ENCODE measurements at regions of chr17 and their contacts with region 1.

Region 1: GRCh38 chr17:13437966-13438779 is 163.6 kb downstream of the HS3ST3A1 start:
- DNase-seq: no peak
- H3K4me3 Mint-ChIP-seq: no peak overlapping the region
- H3K27ac Mint-ChIP-seq: no peak overlapping the region
- H3K4me1 Mint-ChIP-seq: no peaks in the 10 kb centered on the region
- H3K27me3 Mint-ChIP-seq: no peaks in the 10 kb centered on the region
- CTCF ChIP-seq: no peak

Region 2: DNA sequence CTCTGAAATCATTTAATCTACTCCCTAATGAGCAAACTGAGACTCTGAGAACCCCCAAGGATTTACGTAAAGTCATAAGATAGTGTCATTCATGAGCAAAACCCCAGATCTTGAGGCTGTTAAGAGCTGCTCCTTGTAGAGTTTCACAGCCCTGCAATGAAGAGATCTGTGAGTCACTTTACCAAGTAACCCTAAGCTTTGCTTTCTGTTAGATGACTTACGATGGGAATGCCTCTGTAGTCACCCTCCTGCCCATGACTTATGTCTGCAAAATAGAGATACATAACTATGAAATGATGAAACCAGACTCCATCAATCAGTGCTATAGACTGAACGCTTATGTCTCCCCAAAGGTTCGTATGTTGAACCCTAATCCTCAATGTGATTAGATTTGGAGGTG is 45.8 kb after region 1 on chr17:
- CTCF ChIA-PET with region 1: no interaction called
- POLR2A ChIA-PET with region 1: interaction called, 3 read pairs
- intact Hi-C with region 1: loop called (anchors 10 kb)
- DNase-seq: no peak
- H3K4me3 Mint-ChIP-seq: no peak overlapping the region
- H3K27ac Mint-ChIP-seq: no peak overlapping the region
- H3K4me1 Mint-ChIP-seq: no peaks in the 10 kb centered on the region
- H3K27me3 Mint-ChIP-seq: no peaks in the 10 kb centered on the region
- CTCF ChIP-seq: no peak

Region 3: DNA sequence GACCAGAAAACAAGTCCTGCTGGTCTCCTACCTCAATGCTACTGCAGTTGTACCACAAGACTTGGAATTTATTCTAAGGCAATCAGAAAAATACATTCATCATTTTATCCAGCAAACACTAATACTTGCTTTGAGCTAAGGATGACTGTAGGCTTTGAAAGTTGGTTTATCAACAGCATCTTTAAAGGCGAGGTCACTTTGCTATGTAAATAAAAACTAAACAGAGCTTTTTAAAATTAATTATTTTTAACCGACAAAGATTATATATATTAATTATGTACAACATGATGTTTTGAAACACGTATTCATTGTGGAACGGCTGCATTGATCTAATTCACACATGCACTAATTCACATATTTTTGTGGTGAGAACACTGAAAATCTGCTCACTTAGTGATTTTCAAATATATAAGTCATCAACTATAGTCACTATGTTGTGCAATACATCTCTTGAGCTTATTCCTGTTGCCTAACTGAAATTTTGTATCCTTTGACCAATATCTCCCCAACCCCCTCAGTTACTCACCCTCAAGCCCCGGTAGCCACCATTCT is 289.5 kb after region 1 on chr17:
- CTCF ChIA-PET with region 1: no interaction called
- POLR2A ChIA-PET with region 1: no interaction called
- intact Hi-C with region 1: no loop called
- DNase-seq: peak; percentile 75
- H3K4me3 Mint-ChIP-seq: no peak overlapping the region
- H3K27ac Mint-ChIP-seq: peak overlapping the region; percentile 68
- H3K4me1 Mint-ChIP-seq: peaks cover 27% of the 10 kb centered on the region
- H3K27me3 Mint-ChIP-seq: no peaks in the 10 kb centered on the region
- CTCF ChIP-seq: no peak